OCI-LY7 (cell line): ENCODE measurements at regions of chr3 and their contacts with region 1.

Region 1: DNA sequence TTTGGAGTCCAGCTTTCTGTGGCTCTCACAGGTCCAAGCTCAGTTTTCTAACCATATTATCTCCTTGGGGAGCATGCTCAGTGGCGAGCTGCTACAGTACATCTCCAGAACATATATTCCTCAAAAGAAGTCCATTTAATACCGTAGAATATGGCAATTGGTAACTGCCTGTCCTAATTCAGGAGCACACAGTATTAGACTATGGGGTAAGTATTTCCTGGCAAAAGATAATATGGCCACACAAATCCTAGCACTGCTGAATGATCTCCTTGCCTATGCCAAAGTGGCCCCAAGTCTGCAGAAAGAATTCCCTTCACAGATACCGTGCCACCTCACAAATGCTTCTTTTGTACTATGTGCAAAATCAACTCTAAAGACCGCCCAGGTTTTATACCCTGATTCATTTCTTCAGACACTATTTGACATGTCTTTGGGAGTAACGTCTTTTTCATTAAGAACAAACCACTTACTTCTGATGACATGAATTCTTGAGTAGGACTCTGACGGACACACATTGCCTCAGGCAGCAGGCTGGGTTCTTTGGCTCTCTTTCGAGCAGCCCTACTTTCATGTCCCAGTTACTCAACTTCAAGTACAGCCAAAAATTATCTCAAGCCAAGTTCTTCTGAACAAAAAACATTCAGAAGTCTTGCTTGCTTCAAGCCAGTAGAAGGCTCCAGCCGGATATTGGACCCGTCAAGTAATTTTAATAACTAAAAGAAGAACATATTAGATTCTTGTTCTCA is 368.3 kb upstream of the DCBLD2 start:
- DNase-seq: no peak
- H3K4me3 ChIP-seq: no peak overlapping the region
- H3K27ac ChIP-seq: no peak overlapping the region
- H3K4me1 ChIP-seq: no peaks in the 10 kb centered on the region
- CTCF ChIP-seq: no peak

Region 2: DNA sequence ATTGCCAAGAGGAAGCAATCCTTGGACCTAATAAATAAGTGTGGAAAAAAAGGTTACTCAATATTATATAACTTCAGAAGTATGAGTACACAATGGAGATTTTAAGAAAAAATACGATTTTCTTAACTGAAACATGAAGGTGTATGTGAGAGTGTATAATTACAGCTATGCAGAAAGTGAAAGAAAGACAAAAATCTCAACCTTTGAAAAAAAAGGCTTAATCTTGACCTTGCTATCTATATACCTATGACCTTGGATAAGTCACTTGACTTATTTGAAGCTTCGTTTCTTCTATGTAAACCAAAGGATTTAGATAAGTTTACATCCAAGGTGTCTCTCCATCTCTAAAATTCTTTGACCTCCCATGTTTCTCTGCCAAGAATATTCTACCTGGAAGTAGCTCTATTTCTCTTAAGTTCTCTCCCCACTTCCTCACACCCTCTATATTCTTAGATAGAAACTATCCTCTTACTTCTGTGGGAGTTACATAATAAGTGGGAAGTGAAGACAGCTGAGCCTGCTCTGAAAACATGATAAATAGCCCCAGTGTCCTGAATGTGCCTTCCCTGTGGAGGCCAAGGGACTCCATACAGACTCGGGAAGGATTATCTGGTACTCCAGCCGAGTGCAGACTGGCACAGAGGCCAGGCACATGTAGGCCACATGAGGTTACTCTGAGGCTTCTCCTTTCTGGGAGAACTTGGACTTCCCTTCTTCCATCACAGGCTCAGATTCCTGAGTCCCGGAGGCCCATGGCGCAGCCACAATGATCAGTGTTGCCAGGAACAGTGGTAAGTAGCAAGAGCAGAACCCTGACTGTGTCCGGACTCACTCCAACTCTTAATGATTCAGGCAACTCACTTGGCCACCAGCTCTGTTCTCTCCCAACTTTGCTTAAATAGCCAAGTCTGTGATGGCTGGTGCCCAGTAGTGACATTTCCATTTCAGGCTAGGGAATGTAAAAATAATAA is 201.9 kb after region 1 on chr3:
- CTCF ChIA-PET with region 1: no interaction called
- POLR2A ChIA-PET with region 1: no interaction called
- intact Hi-C with region 1: no loop called
- DNase-seq: no peak
- H3K4me3 ChIP-seq: no peak overlapping the region
- H3K27ac ChIP-seq: no peak overlapping the region
- H3K4me1 ChIP-seq: no peaks in the 10 kb centered on the region
- CTCF ChIP-seq: no peak

Region 3: DNA sequence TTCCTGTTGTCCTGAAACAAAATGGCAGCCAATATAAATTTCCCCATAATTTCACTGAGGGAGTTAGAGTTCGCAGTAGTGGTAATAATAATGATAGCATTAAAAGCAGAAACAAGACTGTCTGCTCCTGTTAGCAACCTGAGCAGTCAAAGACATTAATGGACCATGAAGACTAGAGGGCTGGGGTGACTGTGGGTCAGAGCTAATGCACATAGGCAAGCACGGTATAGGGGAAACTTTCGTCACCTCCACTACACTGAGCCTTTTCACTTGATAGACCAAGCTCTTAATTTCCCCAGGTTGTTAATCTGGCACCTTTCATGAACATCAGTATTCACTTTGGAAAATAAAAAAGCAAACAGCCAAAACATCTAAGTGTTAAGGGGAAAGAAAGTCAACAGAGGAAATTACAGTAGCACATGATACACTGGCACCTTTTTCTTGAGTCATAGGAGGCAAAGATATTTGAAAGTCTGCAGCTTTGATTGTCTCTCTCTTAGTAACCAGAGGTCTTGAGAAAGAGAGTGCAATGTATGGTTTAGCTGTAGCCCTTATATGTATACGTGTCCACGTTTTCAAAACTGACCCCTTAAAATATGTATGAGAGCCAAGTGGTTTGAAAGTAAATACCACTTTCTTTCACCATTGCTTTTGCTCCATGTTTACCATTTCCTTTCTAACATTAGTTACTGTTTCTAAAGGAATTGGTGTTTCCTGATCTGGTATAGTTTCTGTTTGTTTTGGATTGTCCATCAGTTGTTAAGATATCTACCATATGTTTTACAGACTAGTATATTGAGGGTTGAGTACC is 739.7 kb after region 1 on chr3:
- CTCF ChIA-PET with region 1: no interaction called
- POLR2A ChIA-PET with region 1: no interaction called
- intact Hi-C with region 1: loop called (anchors 10 kb)
- DNase-seq: no peak
- H3K4me3 ChIP-seq: no peak overlapping the region
- H3K27ac ChIP-seq: no peak overlapping the region
- H3K4me1 ChIP-seq: no peaks in the 10 kb centered on the region
- CTCF ChIP-seq: no peak